ENCODE measurements at regions of chr5 and their contacts with region 1.

Region 1: GRCh38 chr5:97534166-97534565 is 351.1 kb upstream of the RIOK2 start:
- DNase-seq: peak in 1 of 2 donors; percentile 24
- ATAC-seq: peak in 6 of 8 donors; percentile 38 to 74 (median 69)
- H3K4me3 ChIP-seq: no peak overlapping the region
- H3K27ac ChIP-seq: no peak overlapping the region
- H3K4me1 ChIP-seq: peaks cover 0 to 3% (median 0%) of the 10 kb centered on the region in 9 donors
- H3K27me3 ChIP-seq: no peaks in the 10 kb centered on the region
- CTCF ChIP-seq: peak in 8 of 9 donors; percentile 15 to 71 (median 56)

Region 2: DNA sequence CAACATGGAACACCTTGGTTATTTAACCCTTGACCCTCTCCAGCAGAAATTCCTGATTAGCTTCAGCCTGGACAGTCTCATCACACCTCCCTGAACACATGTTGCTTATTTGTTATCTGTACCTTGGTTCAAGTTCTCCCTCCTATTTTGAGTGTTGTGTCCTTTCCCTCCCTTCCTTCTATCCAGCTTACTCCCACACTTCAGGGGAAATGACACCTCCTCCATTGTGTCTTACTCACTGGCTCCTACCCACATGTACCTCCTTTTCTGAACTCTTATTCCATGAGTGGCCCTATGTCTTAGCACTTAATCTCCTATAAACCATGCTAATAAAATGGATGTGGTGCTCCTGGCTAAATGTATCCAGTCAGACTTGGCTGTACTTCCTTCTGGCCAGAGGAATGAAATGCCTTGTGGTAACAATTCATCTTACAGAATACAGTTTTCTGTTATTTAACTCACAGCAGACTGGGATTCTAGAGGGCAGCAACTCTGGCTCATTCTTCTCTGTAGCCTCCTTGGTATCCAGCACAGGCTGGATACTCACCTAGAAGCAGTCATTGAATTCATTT is 402.9 kb before region 1 on chr5:
- intact Hi-C with region 1: no loop called
- DNase-seq: no peak
- ATAC-seq: no peak
- H3K4me3 ChIP-seq: no peak overlapping the region
- H3K27ac ChIP-seq: no peak overlapping the region
- H3K4me1 ChIP-seq: peaks cover 0 to 25% (median 8%) of the 10 kb centered on the region in 9 donors
- H3K27me3 ChIP-seq: no peaks in the 10 kb centered on the region
- CTCF ChIP-seq: no peak

Region 3: DNA sequence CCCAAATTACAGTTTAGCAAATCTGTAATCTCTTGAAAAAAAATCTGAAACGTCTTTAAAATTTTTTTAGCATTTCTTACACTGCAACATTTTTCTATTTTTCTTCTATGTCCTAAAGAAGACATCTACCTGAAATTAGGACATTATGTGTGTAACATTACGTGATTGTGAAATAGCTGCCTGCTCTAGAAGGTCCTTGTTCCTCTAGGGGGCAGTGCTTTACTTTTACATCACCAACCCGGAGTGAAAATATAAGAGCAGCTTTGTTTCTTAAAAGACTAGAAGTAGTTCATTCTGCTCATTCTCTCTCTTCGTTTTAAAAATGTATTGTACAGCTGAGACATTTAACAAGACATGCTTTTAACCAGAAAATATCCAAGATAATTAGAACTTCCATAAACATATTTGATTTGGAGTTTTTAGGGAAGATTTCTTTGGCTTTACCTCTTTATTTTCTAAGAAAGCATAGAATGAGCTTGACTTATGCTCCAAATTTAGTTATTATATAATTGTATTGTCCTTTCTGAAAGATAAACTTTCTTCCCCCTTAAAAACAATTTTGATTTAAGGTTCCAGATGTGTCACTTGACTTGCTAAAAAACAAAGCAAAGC is 303.0 kb before region 1 on chr5:
- intact Hi-C with region 1: loop called in 6 of 10 experiments (anchors 5 to 10 kb)
- DNase-seq: peak in 1 of 2 donors; percentile 56
- ATAC-seq: peak in 7 of 8 donors; percentile 78 to 94 (median 83)
- H3K4me3 ChIP-seq: no peak overlapping the region
- H3K27ac ChIP-seq: peak overlapping the region in 2 of 10 donors; percentile 12 to 31
- H3K4me1 ChIP-seq: peaks cover 0 to 20% (median 3%) of the 10 kb centered on the region in 9 donors
- H3K27me3 ChIP-seq: no peaks in the 10 kb centered on the region
- CTCF ChIP-seq: peak; percentile 53 to 89 (median 82)

Region 4: DNA sequence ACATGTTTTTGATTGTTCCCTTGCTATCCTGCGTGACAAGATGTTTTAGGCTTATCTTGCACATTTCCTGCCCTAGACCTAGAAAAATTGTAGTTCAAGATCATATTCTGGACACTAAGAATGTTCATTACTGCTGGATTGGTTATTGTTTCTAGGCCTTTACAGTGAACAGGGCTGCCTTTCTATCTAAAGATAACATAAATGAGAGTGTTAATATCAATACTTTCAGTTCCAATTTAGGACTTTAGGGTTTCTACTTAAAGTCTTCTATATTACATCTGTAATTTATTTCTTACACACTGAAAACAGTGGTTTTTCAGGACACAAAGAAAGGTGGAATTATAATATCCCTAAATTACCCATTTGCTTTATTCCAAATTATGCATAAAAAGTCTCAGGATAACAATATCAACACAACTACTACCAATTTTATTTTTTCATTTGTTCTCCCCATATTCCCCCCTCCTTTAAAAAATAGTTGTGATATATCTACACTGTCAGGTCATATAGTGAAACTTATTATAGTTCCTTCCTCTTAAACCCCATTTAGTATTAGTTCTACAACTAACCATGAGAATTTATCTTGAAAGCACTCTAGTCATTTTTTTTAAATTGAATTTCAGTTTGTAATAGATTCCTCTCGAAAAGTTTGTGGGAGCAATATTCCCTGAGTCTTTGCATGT is 57.2 kb before region 1 on chr5:
- intact Hi-C with region 1: no loop called
- DNase-seq: no peak
- ATAC-seq: no peak
- H3K4me3 ChIP-seq: no peak overlapping the region
- H3K27ac ChIP-seq: no peak overlapping the region
- H3K4me1 ChIP-seq: peaks cover 0 to 5% (median 0%) of the 10 kb centered on the region in 9 donors
- H3K27me3 ChIP-seq: no peaks in the 10 kb centered on the region
- CTCF ChIP-seq: no peak

Region 5: GRCh38 chr5:97854871-97855762 is 321.0 kb after region 1 on chr5:
- intact Hi-C with region 1: no loop called
- DNase-seq: peak; percentile 11 to 16
- ATAC-seq: peak in 6 of 8 donors; percentile 13 to 91 (median 75)
- H3K4me3 ChIP-seq: no peak overlapping the region
- H3K27ac ChIP-seq: no peak overlapping the region
- H3K4me1 ChIP-seq: no peaks in the 10 kb centered on the region
- H3K27me3 ChIP-seq: no peaks in the 10 kb centered on the region
- CTCF ChIP-seq: no peak

Measured in heart right ventricle (tissue), 16 donors.